ENCODE measurements at regions of chr12 and their contacts with region 1.

Region 1: GRCh38 chr12:64669270-64669842 is 59.1 kb downstream of the RASSF3 start:
- DNase-seq: peak; percentile 50
- H3K4me3 Mint-ChIP-seq: peak overlapping the region; percentile 85
- H3K27ac Mint-ChIP-seq: peak overlapping the region; percentile 96
- H3K4me1 Mint-ChIP-seq: peaks cover 91% of the 10 kb centered on the region
- H3K27me3 Mint-ChIP-seq: no peaks in the 10 kb centered on the region

Region 2: GRCh38 chr12:64625243-64626077 is 43.9 kb before region 1 on chr12:
- CTCF ChIA-PET with region 1: interaction called, 4 read pairs
- POLR2A ChIA-PET with region 1: interaction called, 3 read pairs
- intact Hi-C with region 1: loop called (anchors 2 kb)
- DNase-seq: peak; percentile 58
- H3K4me3 Mint-ChIP-seq: peak overlapping the region; percentile 65
- H3K27ac Mint-ChIP-seq: peak overlapping the region; percentile 88
- H3K4me1 Mint-ChIP-seq: peaks cover 66% of the 10 kb centered on the region
- H3K27me3 Mint-ChIP-seq: no peaks in the 10 kb centered on the region

Region 3: GRCh38 chr12:64679487-64679983 is 10.2 kb after region 1 on chr12:
- CTCF ChIA-PET with region 1: interaction called, 14 read pairs
- POLR2A ChIA-PET with region 1: interaction called, 9 read pairs
- intact Hi-C with region 1: loop called (anchors 1 kb)
- DNase-seq: peak; percentile 78
- H3K4me3 Mint-ChIP-seq: peak overlapping the region; percentile 62
- H3K27ac Mint-ChIP-seq: peak overlapping the region; percentile 91
- H3K4me1 Mint-ChIP-seq: peaks cover 91% of the 10 kb centered on the region
- H3K27me3 Mint-ChIP-seq: no peaks in the 10 kb centered on the region

Region 4: GRCh38 chr12:64687816-64688215 is 18.5 kb after region 1 on chr12:
- CTCF ChIA-PET with region 1: interaction called, 4 read pairs
- POLR2A ChIA-PET with region 1: interaction called, 3 read pairs
- intact Hi-C with region 1: loop called (anchors 2 kb)
- DNase-seq: no peak
- H3K4me3 Mint-ChIP-seq: peak overlapping the region; percentile 24
- H3K27ac Mint-ChIP-seq: peak overlapping the region; percentile 69
- H3K4me1 Mint-ChIP-seq: peaks cover 74% of the 10 kb centered on the region
- H3K27me3 Mint-ChIP-seq: no peaks in the 10 kb centered on the region

Region 5: GRCh38 chr12:64714551-64714968 is 45.2 kb after region 1 on chr12:
- CTCF ChIA-PET with region 1: no interaction called
- POLR2A ChIA-PET with region 1: no interaction called
- intact Hi-C with region 1: no loop called
- DNase-seq: peak; percentile 54
- H3K4me3 Mint-ChIP-seq: no peak overlapping the region
- H3K27ac Mint-ChIP-seq: peak overlapping the region; percentile 66
- H3K4me1 Mint-ChIP-seq: peaks cover 24% of the 10 kb centered on the region
- H3K27me3 Mint-ChIP-seq: no peaks in the 10 kb centered on the region

Region 6: DNA sequence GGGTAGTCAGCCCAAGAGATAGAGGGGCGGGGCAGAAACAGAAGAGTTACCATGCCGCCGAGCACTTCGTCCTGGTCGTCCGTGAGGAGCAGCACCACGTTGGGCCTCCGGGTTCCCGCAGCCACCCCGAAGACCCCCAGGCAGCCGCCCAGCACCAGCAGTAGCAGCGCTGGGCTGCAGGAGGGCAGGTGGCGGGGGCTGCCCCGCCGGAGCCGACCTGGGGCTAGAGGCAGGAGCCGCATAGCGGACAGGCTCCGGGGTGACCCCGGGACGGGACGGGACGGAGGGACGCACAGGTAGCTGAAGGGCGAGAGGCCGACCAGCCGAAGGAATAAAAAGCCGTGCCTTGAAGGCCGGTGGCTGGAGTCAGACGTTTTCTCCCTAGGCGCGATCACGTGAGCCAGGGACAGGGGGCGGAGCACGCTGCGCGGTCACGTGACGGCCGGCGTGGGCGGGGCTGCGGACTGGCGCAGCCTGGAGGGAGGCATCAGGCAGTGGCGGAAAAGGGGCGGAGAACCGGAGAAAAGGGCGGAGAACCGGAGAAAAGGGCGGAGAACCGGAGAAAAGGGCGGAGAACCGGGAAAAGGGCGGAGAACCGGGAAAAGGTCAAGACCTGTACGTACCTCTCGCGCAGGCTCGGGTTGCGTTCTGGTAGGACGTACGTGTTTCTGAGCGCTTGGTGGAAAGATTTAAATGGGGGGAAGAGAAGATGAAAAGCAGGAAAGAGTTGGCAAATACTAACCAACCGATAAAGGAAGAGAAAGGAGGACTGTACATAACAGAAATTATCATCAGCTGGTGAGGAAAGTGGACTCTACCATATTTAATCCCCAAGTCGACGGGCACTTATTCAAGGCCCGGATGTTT is 89.9 kb after region 1 on chr12 and contains the start of gene GNS:
- CTCF ChIA-PET with region 1: no interaction called
- POLR2A ChIA-PET with region 1: no interaction called
- intact Hi-C with region 1: loop called (anchors 5 kb)
- DNase-seq: peak; percentile 97
- H3K4me3 Mint-ChIP-seq: peak within 1 kb of the TSS; percentile 85
- H3K27ac Mint-ChIP-seq: peak within 1 kb of the TSS; percentile 90
- H3K4me1 Mint-ChIP-seq: peaks cover 43% of the 10 kb centered on the region
- H3K27me3 Mint-ChIP-seq: no peaks in the 10 kb centered on the region
- total RNA-seq, gene GNS: 21.2 to 23.1 TPM

Region 7: GRCh38 chr12:64789815-64790214 is 120.5 kb after region 1 on chr12:
- CTCF ChIA-PET with region 1: no interaction called
- POLR2A ChIA-PET with region 1: no interaction called
- intact Hi-C with region 1: no loop called
- DNase-seq: no peak
- H3K4me3 Mint-ChIP-seq: no peak overlapping the region
- H3K27ac Mint-ChIP-seq: no peak overlapping the region
- H3K4me1 Mint-ChIP-seq: no peaks in the 10 kb centered on the region
- H3K27me3 Mint-ChIP-seq: peaks cover 8% of the 10 kb centered on the region

Measured in activated CD4-positive, alpha-beta memory T cell treated with anti-CD3 and anti-CD28 coated beads for 36 hours (primary cell).